MCF 10A (cell line): ENCODE measurements at regions of chr19 and their contacts with region 1.

Region 1: DNA sequence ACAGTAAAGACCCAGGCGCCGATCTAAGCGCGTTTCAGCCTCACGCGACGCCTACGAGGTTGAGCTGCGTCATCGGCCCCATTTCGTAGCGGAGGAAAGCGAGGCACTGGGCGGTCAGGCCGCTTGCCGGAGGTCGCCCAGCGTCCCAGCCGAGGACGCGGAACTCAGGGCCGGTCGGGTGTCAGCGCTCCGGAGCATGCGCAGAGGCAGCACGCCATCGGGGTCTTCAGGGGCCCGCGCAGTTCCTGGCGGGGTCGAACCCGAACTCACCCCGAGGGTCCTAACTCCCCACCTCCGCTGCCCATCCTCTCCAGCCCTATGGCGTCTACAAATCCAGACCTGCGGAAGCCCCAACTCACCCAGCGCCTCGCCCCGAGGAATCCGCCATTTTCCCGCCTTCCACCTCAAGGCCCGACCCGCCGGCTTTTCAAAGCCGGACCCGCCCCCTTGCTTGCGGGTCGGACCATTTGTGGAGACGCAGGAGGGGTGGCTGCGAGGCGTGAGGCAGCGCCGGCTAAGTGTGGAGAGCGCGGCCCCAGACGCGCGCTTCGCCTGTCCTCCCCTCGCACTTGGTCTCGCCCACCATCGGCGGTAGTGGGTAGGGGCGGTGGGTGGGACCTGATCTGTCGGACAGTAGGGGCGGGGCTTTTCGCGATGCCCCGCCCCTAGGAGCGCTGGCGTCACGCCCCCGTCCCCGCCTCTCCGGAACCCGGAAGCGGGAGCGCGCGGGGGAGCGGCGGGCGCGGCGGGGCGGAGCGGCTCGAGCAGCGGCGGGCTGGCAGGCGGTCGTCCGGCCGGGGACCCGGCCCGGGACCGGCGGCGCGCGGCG is at the starts of genes HAUS8 and MYO9B:
- DNase-seq: peak; percentile 99
- H3K4me3 Mint-ChIP-seq: peak within 1 kb of the TSS; percentile 95
- H3K27ac Mint-ChIP-seq: peak within 1 kb of the TSS; percentile 88
- H3K4me1 Mint-ChIP-seq: peaks cover 38% of the 10 kb centered on the region
- H3K27me3 Mint-ChIP-seq: no peaks in the 10 kb centered on the region
- CTCF ChIP-seq: no peak
- total RNA-seq, gene HAUS8: 6.6 and 8.4 TPM in 2 replicates
- total RNA-seq, gene MYO9B: 43.5 and 49.5 TPM in 2 replicates

Region 2: GRCh38 chr19:17107525-17108452 is 32.5 kb after region 1 on chr19:
- CTCF ChIA-PET with region 1: no interaction called
- POLR2A ChIA-PET with region 1: interaction called, 12 read pairs
- intact Hi-C with region 1: loop called (anchors 1 kb)
- DNase-seq: peak; percentile 99
- H3K4me3 Mint-ChIP-seq: peak overlapping the region; percentile 59
- H3K27ac Mint-ChIP-seq: peak overlapping the region; percentile 87
- H3K4me1 Mint-ChIP-seq: peaks cover 13% of the 10 kb centered on the region
- H3K27me3 Mint-ChIP-seq: no peaks in the 10 kb centered on the region
- CTCF ChIP-seq: no peak

Region 3: GRCh38 chr19:17135001-17135853 is 60.0 kb after region 1 on chr19:
- CTCF ChIA-PET with region 1: interaction called, 3 read pairs
- POLR2A ChIA-PET with region 1: interaction called, 4 read pairs
- intact Hi-C with region 1: loop called (anchors 1 kb)
- DNase-seq: peak; percentile 88
- H3K4me3 Mint-ChIP-seq: peak overlapping the region; percentile 48
- H3K27ac Mint-ChIP-seq: peak overlapping the region; percentile 81
- H3K4me1 Mint-ChIP-seq: peaks cover 13% of the 10 kb centered on the region
- H3K27me3 Mint-ChIP-seq: no peaks in the 10 kb centered on the region
- CTCF ChIP-seq: no peak

Region 4: DNA sequence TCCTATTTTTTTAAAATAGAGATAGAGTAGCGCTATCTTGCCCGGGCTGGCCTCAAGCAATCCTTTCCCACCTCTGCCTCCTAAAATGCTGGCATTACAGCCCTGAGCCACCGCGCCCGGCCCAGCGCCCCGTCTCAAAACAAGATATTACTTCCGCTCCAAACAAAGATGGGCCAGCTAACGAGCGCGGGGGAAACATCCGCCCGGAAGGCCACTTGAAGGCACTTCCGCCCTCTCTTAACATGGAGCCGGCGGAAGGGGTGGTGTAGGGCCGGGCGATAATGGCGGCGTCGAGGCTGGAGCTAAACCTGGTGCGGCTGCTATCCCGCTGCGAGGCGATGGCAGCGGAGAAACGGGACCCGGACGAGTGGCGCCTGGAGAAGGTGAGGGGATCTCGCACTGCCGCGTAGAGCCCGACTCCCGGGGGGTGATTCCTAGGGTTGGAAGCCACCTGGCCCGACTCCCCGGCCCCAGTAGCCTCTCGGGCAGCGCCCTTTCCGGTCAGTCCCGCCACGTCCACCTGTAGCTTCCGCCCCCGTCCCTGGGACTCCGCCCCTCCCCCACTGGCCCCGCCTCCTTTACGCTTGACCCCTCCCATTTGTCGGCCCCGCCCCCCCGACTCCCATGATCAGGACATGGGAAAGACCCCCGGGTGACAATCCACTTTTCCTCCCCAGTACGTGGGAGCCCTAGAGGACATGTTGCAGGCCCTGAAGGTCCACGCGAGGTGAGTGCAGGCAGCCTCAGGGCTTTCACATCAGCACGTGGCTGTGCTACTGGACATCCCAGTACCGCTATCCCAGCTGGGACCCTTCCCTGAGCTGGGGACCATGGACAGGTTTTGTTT is 140.1 kb after region 1 on chr19 and contains the start of gene USE1:
- CTCF ChIA-PET with region 1: interaction called, 3 read pairs
- POLR2A ChIA-PET with region 1: interaction called, 15 read pairs
- intact Hi-C with region 1: loop called (anchors 10 kb)
- DNase-seq: peak; percentile 95
- H3K4me3 Mint-ChIP-seq: peak within 1 kb of the TSS; percentile 80
- H3K27ac Mint-ChIP-seq: peak within 1 kb of the TSS; percentile 98
- H3K4me1 Mint-ChIP-seq: no peaks in the 10 kb centered on the region
- H3K27me3 Mint-ChIP-seq: no peaks in the 10 kb centered on the region
- CTCF ChIP-seq: no peak
- total RNA-seq, gene USE1: 29.9 and 47.9 TPM in 2 replicates